H1 (cell line): ENCODE measurements at regions of chr19 and their contacts with region 1.

Region 1: DNA sequence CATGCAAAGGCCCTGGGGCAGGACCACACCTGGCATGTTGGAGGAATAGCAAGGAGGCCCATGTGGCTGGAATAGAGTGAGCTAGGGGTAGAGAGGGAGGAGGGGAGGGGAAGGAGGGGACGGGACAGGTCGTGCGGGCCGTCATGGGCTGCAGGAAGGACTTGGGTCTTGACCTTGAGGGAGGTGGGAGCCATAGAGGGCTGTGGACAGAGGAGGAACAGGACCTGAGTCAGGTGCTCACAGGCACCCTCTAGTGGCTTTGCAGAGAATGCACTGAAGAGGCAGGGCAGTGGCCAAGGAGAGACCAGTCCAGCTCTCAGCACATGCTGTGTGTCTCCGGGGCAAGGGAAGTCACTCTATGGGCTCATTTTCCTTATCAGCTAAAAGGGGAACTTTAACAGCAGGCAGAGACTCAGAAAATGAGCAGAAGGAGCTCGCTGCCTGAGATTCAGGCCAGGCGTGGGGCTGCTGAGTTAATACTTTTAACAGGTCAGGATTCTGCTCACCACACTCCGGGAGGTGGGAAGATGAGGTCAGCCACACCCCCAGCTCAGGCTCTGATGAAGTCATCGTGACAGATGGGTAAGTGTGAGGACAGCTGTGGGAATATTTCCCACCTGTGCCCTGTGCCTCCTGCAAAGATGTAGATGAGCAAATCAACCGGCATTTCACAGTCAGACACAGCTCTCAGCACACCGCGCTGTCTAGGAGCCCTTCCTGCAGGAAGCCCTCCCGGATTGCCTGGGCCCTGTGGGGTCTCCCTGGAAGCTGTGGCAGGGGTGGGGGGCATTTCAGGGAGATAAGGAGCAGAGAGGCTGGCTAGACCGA is 6.0 kb upstream of the TNFAIP8L1 start:
- DNase-seq: peak in 1 of 2 experiments; percentile 84
- H3K4me3 ChIP-seq: no peak overlapping the region
- H3K27ac ChIP-seq: no peak overlapping the region
- H3K4me1 ChIP-seq: peaks cover 0 to 7% (median 2%) of the 10 kb centered on the region in 4 experiments; a peak in 2 of 7 replicates
- H3K27me3 ChIP-seq: peaks cover 0 to 13% (median 11%) of the 10 kb centered on the region in 4 experiments; a peak in 5 of 7 replicates
- CTCF ChIP-seq: peak; percentile 82 to 99 (median 99)
- EP300 ChIP-seq: no peak
- POLR2A ChIP-seq: no peak
- RAD21 ChIP-seq: peak; percentile 61 to 63

Region 2: GRCh38 chr19:4524808-4525562 is 108.4 kb before region 1 on chr19:
- CTCF ChIA-PET with region 1: interaction called, 46 read pairs
- POLR2A ChIA-PET with region 1: interaction called, 3 read pairs
- DNase-seq: peak in 1 of 2 experiments; percentile 95
- H3K4me3 ChIP-seq: no peak overlapping the region
- H3K27ac ChIP-seq: no peak overlapping the region
- H3K4me1 ChIP-seq: no peaks in the 10 kb centered on the region; a peak in 2 of 7 replicates
- H3K27me3 ChIP-seq: peaks cover 0 to 10% (median 5%) of the 10 kb centered on the region in 4 experiments; a peak in 3 of 7 replicates
- CTCF ChIP-seq: peak; percentile 74 to 98 (median 95)
- EP300 ChIP-seq: no peak
- POLR2A ChIP-seq: no peak
- RAD21 ChIP-seq: peak; percentile 34 to 45

Region 3: GRCh38 chr19:4547303-4548237 is 85.8 kb before region 1 on chr19:
- CTCF ChIA-PET with region 1: interaction called, 12 read pairs
- POLR2A ChIA-PET with region 1: no interaction called
- DNase-seq: no peak
- H3K4me3 ChIP-seq: no peak overlapping the region
- H3K27ac ChIP-seq: no peak overlapping the region
- H3K4me1 ChIP-seq: no peaks in the 10 kb centered on the region; a peak in 1 of 7 replicates
- H3K27me3 ChIP-seq: no peaks in the 10 kb centered on the region
- CTCF ChIP-seq: peak; percentile 42 to 79 (median 65)
- EP300 ChIP-seq: no peak
- POLR2A ChIP-seq: no peak
- RAD21 ChIP-seq: peak; percentile 9 to 22; a peak in 1 of 4 replicates

Region 4: DNA sequence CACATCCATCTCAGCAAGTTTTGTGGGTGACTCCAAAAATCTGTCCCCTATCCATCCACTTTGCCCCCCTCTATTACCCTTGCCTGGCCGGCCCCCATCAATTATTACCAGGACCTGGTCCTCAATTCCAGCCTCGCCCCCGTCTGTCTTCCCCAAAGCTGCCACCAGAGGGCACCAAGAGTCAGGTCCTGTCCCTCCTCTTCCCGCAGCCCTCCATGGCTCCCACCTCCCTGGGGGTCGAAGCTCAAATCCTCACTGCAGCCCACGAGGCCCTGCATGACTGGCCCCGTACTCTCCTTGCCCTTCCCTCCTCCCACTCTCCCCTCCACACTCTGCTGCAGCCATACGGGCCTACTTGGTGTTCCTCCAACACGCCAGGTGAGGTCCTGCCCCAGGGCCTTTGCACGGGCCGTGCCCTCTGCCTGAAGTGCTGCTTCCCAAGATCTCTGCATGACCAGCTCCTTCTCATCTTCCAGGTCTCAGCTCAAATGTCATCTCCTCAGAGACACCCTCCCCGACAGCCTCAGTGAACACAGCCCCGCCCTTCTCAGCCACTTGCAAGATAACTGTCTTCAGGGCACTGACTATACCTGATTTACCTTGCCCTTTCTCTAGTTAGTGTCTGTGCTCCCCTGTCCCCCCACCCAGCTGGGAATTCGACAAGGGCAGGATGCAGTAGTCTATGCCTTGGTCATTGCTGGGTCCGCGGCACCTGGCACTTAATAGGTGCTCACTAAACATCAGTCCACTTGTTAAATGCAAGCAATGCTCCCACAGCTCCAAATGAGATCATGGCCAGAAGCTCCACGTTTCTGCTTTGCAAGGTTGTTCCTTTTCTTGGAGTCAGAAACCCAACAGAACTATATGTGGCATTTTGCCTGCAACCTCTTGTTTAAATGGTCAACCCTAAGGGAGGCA is 57.1 kb before region 1 on chr19:
- CTCF ChIA-PET with region 1: interaction called, 316 read pairs
- POLR2A ChIA-PET with region 1: interaction called, 7 read pairs
- DNase-seq: peak in 1 of 2 experiments; percentile 96
- H3K4me3 ChIP-seq: 0 out of 8 replicates have a peak overlapping the region, but pooled peaks of 1 of the 4 experiments have one; percentile 36
- H3K27ac ChIP-seq: no peak overlapping the region
- H3K4me1 ChIP-seq: peaks cover 3 to 9% (median 7%) of the 10 kb centered on the region in 4 experiments
- H3K27me3 ChIP-seq: no peaks in the 10 kb centered on the region
- CTCF ChIP-seq: peak; percentile 79 to 94 (median 88)
- EP300 ChIP-seq: no peak
- POLR2A ChIP-seq: no peak
- RAD21 ChIP-seq: peak; percentile 55 to 66

Region 5: GRCh38 chr19:4589579-4590410 is 43.6 kb before region 1 on chr19:
- CTCF ChIA-PET with region 1: interaction called, 49 read pairs
- POLR2A ChIA-PET with region 1: interaction called, 3 read pairs
- DNase-seq: peak in 1 of 2 experiments; percentile 57
- H3K4me3 ChIP-seq: no peak overlapping the region
- H3K27ac ChIP-seq: no peak overlapping the region
- H3K4me1 ChIP-seq: no peaks in the 10 kb centered on the region; a peak in 1 of 7 replicates
- H3K27me3 ChIP-seq: peaks cover 0 to 6% (median 4%) of the 10 kb centered on the region in 4 experiments; a peak in 3 of 7 replicates
- CTCF ChIP-seq: peak; percentile 27 to 33 (median 31)
- EP300 ChIP-seq: no peak
- POLR2A ChIP-seq: no peak
- RAD21 ChIP-seq: peak; percentile 21 to 29; a peak in 2 of 4 replicates

Region 6: GRCh38 chr19:4606921-4607678 is 26.3 kb before region 1 on chr19:
- CTCF ChIA-PET with region 1: interaction called, 32 read pairs
- POLR2A ChIA-PET with region 1: interaction called, 4 read pairs
- DNase-seq: peak in 1 of 2 experiments; percentile 74
- H3K4me3 ChIP-seq: peak overlapping the region; percentile 3 to 47 (median 25); a peak in 5 of 8 replicates
- H3K27ac ChIP-seq: no peak overlapping the region
- H3K4me1 ChIP-seq: peaks cover 0 to 4% (median 2%) of the 10 kb centered on the region in 4 experiments; a peak in 4 of 7 replicates
- H3K27me3 ChIP-seq: peaks cover 0 to 2% (median 0%) of the 10 kb centered on the region in 4 experiments; a peak in 4 of 7 replicates
- CTCF ChIP-seq: peak; percentile 50 to 68 (median 62)
- EP300 ChIP-seq: no peak
- POLR2A ChIP-seq: no peak
- RAD21 ChIP-seq: peak; percentile 53 to 70

Region 7: GRCh38 chr19:4909897-4910593 is 276.7 kb after region 1 on chr19:
- CTCF ChIA-PET with region 1: no interaction called
- POLR2A ChIA-PET with region 1: no interaction called
- DNase-seq: peak; percentile 64 to 92
- H3K4me3 ChIP-seq: peak overlapping the region; percentile 46 to 83 (median 56)
- H3K27ac ChIP-seq: no peak overlapping the region; the same call in 1 of the 2 replicates
- H3K4me1 ChIP-seq: peaks cover 0 to 14% (median 11%) of the 10 kb centered on the region in 4 experiments; a peak in 6 of 7 replicates
- H3K27me3 ChIP-seq: no peaks in the 10 kb centered on the region; a peak in 2 of 7 replicates
- CTCF ChIP-seq: no peak
- EP300 ChIP-seq: no peak
- POLR2A ChIP-seq: no peak; a peak in 1 of 3 replicates
- RAD21 ChIP-seq: no peak